Caco-2 (cell line): ENCODE measurements at regions of chr9 and their contacts with region 1.

Region 1: GRCh38 chr9:76311586-76311985 is 82.6 kb downstream of the RFK start:
- DNase-seq: no peak
- H3K4me3 ChIP-seq: no peak overlapping the region
- H3K4me3 Mint-ChIP-seq: no peak overlapping the region
- H3K27ac Mint-ChIP-seq: peak overlapping the region; percentile 70
- H3K4me1 ChIP-seq: no peaks in the 10 kb centered on the region
- H3K4me1 Mint-ChIP-seq: no peaks in the 10 kb centered on the region
- H3K27me3 ChIP-seq: no peaks in the 10 kb centered on the region
- H3K27me3 Mint-ChIP-seq: no peaks in the 10 kb centered on the region
- CTCF ChIP-seq: no peak

Region 2: GRCh38 chr9:76374702-76375559 is 63.3 kb after region 1 on chr9:
- CTCF ChIA-PET with region 1: no interaction called
- POLR2A ChIA-PET with region 1: no interaction called
- intact Hi-C with region 1: loop called (anchors 10 kb)
- DNase-seq: peak; percentile 51 to 75
- H3K4me3 ChIP-seq: no peak overlapping the region
- H3K4me3 Mint-ChIP-seq: peak overlapping the region; percentile 27
- H3K27ac Mint-ChIP-seq: peak overlapping the region; percentile 81
- H3K4me1 ChIP-seq: peaks cover 13% of the 10 kb centered on the region
- H3K4me1 Mint-ChIP-seq: peaks cover 7% of the 10 kb centered on the region
- H3K27me3 ChIP-seq: no peaks in the 10 kb centered on the region
- H3K27me3 Mint-ChIP-seq: no peaks in the 10 kb centered on the region
- CTCF ChIP-seq: no peak